ENCODE measurements at regions of chr2 and their contacts with region 1.

Region 1: DNA sequence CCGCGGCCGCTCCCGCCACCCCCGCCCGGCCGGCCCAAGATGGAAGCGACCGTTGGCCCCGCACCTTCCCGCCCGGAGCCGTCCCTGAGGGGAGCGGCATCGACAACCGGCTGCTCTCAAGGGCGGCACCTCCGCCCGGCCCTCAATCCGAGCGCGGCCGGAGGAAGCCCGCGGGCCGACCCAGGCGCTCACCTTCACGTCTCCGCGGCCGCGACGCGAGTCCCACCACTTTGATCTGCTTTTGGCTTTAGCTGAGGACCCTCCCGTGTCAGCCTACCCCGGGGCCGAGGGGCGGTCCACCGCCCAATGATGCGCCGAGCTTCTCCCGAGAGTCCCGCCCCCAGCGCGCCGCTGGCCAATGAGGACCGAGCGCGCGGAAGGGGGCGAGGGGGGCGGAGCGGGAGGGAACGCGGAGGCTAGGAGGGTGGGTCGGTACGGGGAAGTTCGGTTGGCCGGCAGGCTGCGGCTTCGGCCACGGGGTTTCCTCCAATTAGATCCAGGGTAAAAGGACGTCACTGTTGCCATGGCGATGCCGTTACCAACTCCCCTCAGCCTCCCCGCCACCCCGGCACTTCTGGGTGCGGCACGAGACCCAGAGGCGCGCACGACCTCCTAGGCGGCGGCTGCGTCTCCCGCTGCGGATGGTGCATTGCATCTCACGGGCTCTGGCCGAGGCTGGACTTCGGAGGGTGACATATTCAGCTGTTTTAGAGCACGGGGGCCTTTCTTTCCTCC is at the start of gene YWHAQ:
- DNase-seq: peak; percentile 89
- H3K4me3 ChIP-seq: peak within 1 kb of the TSS; percentile 98
- CTCF ChIP-seq: no peak

Region 2: DNA sequence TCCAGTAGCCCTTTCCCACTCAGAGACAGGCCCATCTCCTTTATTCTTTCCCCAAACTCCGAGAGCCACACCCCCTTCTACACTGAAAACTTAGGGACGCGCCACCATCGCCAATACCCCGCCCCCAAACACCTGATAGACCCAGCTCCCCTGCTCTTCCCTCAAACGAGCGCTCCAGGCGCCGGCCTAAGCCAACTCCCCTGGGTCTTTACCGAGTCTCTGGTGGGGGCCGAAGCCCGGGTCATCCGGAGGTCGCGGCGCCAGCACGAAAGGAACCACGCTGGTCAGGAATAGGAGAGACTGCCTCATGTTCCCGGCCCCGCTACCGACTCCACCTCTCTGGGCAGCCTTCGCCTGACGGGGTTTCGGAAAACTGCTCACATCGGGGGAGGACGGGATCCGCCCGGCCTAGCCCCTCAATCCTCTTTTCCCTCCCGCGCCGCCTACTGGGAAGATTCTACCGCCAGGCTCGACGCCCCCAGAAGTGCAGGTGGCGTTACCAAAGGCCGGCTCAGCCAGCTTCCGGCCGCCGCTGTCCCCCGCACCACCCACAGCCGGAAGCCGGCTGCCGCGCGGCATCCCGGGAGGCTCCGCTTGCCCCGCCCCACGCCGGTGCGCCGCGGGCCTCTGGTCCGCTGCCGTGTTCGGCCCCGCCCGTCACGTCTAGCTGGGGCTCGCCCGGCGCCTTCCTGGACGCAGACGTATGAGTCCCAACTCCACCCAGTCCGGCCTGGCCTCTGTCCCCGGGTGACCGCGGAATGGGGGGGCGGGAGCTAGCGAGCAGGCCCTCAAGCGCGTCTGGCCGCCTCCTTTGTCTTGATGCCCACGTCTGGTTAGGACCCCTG is 75.4 kb before region 1 on chr2 and contains the start of gene ADAM17:
- CTCF ChIA-PET with region 1: no interaction called
- POLR2A ChIA-PET with region 1: interaction called, 28 read pairs
- DNase-seq: peak; percentile 76
- H3K4me3 ChIP-seq: peak within 1 kb of the TSS; percentile 95
- CTCF ChIP-seq: peak; percentile 79

Region 3: DNA sequence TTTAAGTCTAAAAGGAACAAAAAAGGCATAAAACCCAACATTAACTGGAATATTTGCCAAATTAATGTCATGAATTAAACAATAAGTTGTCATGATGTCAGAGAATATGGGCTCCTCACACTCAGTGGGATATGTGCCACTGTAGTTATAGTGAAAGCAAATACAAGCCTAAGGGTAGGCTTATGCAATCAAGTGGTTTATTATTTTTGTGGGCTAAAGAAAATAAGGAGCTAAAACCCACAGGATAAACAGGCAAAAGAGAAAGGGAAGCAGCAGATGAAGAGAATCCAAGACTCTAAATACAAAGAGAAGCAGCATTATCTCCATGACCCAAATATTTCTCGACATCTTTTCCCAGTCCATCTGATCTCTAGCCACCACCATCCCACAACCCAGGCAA is 17.6 kb before region 1 on chr2:
- CTCF ChIA-PET with region 1: interaction called, 3 read pairs
- POLR2A ChIA-PET with region 1: interaction called, 14 read pairs
- DNase-seq: peak; percentile 72
- H3K4me3 ChIP-seq: no peak overlapping the region
- CTCF ChIP-seq: no peak

Region 4: DNA sequence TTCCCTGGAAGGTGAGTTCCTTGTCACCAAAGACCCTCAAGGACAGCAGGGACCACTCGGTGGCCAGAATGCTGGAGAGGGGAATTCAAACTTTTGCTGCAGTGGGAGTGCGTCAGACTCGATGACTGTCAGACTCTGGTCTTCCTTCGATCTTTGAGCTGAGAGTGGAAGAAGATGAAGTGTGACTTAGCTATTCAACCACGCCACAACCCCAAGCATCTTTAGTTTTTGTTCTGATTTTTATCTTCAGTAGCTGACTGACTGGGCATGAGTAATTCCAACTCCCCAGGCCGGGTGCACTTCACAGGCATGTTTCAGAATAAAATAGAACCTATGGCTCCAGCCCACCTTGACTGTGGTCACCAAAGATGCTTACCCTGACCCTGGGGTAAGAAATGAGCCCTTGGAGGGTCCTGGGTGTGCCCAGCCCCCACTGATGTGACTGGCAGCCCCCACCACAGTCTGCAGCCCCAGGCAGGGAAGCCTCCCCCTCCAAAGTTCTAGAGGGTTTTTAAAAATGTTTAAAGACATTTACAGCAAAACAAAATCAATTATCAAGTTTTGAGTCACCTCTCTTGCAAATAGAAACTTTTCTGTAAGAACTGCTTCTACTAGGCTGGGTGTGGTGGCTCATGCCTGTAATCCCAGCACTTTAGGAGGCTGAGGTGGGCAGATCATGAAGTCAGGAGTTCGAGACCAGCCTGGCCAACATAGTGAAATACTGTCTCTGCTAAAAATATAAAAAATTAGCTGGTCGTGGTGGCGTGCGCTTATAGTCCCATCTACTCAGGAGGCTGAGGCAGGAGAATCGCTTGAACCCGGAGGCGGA is 24.7 kb after region 1 on chr2:
- CTCF ChIA-PET with region 1: interaction called, 5 read pairs
- POLR2A ChIA-PET with region 1: interaction called, 13 read pairs
- DNase-seq: peak; percentile 83
- H3K4me3 ChIP-seq: no peak overlapping the region; the same call in none of the 2 replicates
- CTCF ChIP-seq: no peak

Region 5: DNA sequence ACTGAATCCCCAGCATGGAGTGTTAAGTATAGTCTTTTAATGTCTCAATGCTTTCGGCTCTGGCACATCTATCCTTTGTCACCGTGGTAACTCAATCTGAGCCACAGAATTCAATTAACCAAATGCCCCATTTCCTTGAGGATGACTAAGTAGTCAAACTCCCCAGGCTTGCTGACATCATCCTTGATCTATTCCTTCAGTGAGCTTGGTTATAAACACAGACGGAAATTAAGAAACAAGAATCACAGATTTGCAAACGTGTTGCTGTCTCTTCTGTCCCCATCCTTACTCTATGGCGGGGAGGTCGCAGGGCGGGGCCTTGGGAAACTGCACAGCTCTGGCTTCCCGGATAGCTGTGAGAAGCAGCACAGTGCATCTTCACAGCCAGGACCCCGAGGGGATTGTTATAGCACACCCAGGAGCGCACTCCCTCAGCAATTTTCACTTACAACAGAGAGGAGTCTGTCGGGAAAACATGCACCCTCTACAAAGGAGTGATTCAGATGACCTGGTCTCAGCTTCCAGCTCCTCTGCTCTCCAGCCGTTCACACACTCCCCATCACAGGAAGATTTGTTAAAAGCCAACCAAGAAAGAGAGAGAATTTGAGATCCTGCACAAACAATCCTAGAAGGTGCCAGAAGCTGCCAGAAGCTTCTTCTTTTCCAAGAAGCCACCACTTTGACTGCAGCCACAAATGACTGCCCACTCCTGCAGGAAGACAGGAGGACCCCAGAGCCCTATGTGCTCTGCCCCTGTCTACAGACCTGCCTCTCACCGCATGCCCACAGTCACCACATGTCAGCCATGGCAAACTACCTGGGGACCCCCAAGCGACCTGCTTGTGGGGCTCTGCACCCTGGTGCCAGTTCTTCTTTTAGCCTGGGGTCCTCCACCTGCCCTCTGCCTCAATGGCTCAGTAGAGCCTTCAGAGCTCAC is 44.8 kb after region 1 on chr2:
- CTCF ChIA-PET with region 1: no interaction called
- POLR2A ChIA-PET with region 1: interaction called, 11 read pairs
- DNase-seq: peak; percentile 84
- H3K4me3 ChIP-seq: peak overlapping the region; percentile 47
- CTCF ChIP-seq: no peak

Region 6: GRCh38 chr2:9753276-9753600 is 122.3 kb after region 1 on chr2:
- CTCF ChIA-PET with region 1: interaction called, 3 read pairs
- POLR2A ChIA-PET with region 1: interaction called, 10 read pairs
- DNase-seq: peak; percentile 76
- H3K4me3 ChIP-seq: peak overlapping the region; percentile 33
- CTCF ChIP-seq: no peak

Measured in AG04449 (cell line).